Dendritic cell treated with granulocyte-macrophage colony-stimulating factor and Interleukin-4, amounts not matched to agents 40 ng/mL and 50 ng/mL, for 4 days (primary cell): ENCODE measurements at regions of chr10 and their contacts with region 1.

Region 1: DNA sequence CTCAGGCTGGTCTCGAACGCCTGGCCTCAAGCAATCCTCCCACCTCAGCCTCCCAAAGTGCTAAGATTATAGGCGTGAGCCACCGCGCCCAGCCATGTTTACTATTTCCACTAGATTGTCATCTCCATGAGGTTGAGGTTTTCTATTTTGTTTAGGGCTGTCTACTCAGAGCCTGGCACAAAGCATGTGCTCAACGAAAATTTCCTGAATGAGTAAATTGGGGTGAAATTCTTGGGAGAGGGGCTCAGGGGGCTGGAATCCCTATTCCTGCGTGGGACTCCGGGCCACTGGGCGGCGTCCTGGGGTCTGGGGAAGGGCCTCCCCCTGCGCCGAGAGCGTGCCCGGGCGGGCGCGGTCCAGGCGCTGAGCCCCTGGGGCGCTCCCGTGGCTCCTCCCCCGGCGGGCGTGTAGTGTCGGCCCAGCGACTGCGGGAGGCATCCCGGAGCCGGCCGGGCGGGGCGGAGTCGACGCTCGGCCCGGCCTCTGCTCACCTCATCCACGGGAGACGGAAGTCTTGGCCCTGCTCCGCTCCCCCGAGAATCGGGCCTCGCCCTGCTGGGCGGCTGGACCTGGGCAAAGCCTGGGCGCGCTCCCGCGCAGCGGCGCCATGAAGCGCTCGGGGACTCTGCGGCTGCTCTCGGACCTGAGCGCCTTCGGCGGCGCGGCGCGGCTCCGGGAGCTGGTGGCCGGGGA is at the start of gene HPS6:
- H3K4me3 Mint-ChIP-seq: peak within 1 kb of the TSS; percentile 94
- H3K27ac Mint-ChIP-seq: peak within 1 kb of the TSS; percentile 88
- H3K4me1 Mint-ChIP-seq: peaks cover 54% of the 10 kb centered on the region
- H3K27me3 Mint-ChIP-seq: no peaks in the 10 kb centered on the region

Region 2: DNA sequence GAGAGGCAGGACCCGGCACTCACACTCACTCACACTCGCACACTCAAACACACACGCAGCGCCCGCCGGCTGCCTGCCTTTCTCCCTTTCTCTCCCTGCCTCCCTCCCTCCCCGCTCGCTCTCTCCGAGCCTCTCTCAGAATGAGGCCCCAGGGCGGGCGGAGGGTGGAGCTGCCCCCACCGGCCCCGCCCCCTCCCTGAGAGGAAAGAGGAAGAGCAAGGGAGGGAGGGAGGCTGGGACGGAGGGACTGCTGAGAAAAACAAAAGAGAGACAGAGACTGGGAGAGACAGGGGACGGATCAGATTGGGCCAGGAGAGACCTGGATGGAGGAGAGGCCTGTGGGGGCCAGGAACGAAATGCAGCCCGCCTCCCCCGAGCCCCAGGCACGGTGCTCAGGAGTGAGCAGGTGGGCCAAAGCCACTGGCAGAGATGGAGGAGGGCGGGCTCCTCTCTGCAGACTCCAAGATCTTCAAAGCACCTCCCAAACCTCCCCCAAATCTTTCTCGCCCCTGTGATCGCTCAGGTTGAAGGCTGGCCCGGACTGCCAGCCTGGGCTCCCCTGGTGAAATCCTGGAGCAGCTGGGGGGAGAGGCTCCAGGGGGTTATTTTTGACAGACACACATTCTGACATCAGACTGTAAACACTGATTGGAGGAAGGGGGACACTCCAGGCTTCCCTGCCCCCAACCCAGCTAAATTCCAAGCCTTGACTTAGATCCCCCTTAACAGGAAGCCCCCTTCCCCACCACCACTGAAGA is 50.0 kb after region 1 on chr10:
- intact Hi-C with region 1: loop called (anchors 5 kb)
- H3K4me3 Mint-ChIP-seq: peak overlapping the region; percentile 86
- H3K27ac Mint-ChIP-seq: peak overlapping the region; percentile 91
- H3K4me1 Mint-ChIP-seq: peaks cover 68% of the 10 kb centered on the region
- H3K27me3 Mint-ChIP-seq: no peaks in the 10 kb centered on the region